Stomach (tissue), 19 donors: ENCODE measurements at regions of chr18 and their contacts with region 1.

Region 1: GRCh38 chr18:35577045-35577848 is 4.3 kb upstream of the GALNT1 start:
- DNase-seq: no peak
- H3K4me3 ChIP-seq: no peak overlapping the region
- H3K27ac ChIP-seq: no peak overlapping the region
- H3K4me1 ChIP-seq: peaks cover 2 to 15% (median 6%) of the 10 kb centered on the region in 4 donors
- H3K27me3 ChIP-seq: no peaks in the 10 kb centered on the region
- CTCF ChIP-seq: no peak
- EP300 ChIP-seq: no peak
- POLR2A ChIP-seq: no peak

Region 2: GRCh38 chr18:35502052-35502451 is 75.2 kb before region 1 on chr18:
- intact Hi-C with region 1: loop called (anchors 10 kb)
- DNase-seq: no peak
- H3K4me3 ChIP-seq: no peak overlapping the region
- H3K27ac ChIP-seq: no peak overlapping the region
- H3K4me1 ChIP-seq: peaks cover 5 to 14% (median 11%) of the 10 kb centered on the region in 4 donors
- H3K27me3 ChIP-seq: no peaks in the 10 kb centered on the region
- CTCF ChIP-seq: no peak
- EP300 ChIP-seq: no peak
- POLR2A ChIP-seq: no peak

Region 3: DNA sequence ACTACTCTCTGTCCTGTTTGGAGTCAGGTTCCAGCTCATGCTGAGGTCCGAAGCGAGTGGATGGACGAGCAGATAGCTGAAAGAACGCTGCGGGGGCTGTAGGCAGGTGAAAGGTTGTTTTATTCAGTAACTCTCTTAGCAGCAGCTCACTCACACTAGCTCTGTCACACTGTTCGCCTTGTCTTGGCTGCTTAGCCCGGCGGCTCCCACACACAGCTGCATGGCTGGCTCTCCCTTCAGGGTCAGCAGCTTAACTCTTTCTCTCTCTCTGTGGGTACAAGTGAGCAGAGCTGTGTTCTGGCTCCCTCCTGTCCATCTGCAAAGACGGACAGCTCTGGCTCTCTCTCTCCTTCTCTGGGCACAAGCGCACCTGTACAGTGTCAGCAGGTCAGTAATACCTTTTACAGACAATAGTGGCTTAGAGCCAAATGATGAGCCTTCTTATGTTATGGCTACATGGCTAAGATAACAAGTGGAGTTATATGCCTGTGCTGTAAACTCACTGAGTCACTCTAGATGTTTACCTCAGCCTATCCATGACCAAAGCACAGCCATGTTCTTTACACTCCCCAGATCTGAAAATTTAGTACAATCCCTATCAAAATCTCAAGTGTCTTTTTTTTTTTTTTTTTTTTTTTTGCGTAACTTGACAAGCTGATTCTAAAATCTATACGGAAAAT is 153.6 kb after region 1 on chr18:
- intact Hi-C with region 1: no loop called
- DNase-seq: peak in 1 of 2 donors; percentile 32
- H3K4me3 ChIP-seq: no peak overlapping the region
- H3K27ac ChIP-seq: no peak overlapping the region
- H3K4me1 ChIP-seq: no peaks in the 10 kb centered on the region
- H3K27me3 ChIP-seq: no peaks in the 10 kb centered on the region
- CTCF ChIP-seq: no peak
- EP300 ChIP-seq: no peak
- POLR2A ChIP-seq: no peak

Region 4: GRCh38 chr18:35972197-35973052 is 395.2 kb after region 1 on chr18 and contains the start of gene RMP24:
- intact Hi-C with region 1: no loop called
- DNase-seq: peak; percentile 97 to 98
- H3K4me3 ChIP-seq: peak within 1 kb of the TSS; percentile 79 to 87 (median 83)
- H3K27ac ChIP-seq: peak within 1 kb of the TSS; percentile 87 to 98 (median 93)
- H3K4me1 ChIP-seq: peaks cover 14 to 39% (median 23%) of the 10 kb centered on the region in 4 donors
- H3K27me3 ChIP-seq: no peaks in the 10 kb centered on the region
- CTCF ChIP-seq: no peak
- EP300 ChIP-seq: no peak
- POLR2A ChIP-seq: no peak